AG04450 (cell line): ENCODE measurements at regions of chr1 and their contacts with region 1.

Region 1: GRCh38 chr1:68321084-68321685 is 88.9 kb upstream of the WLS start:
- DNase-seq: no peak
- H3K4me3 ChIP-seq: no peak overlapping the region
- H3K27ac ChIP-seq: no peak overlapping the region
- H3K27me3 ChIP-seq: no peaks in the 10 kb centered on the region
- CTCF ChIP-seq: peak; percentile 88

Region 2: DNA sequence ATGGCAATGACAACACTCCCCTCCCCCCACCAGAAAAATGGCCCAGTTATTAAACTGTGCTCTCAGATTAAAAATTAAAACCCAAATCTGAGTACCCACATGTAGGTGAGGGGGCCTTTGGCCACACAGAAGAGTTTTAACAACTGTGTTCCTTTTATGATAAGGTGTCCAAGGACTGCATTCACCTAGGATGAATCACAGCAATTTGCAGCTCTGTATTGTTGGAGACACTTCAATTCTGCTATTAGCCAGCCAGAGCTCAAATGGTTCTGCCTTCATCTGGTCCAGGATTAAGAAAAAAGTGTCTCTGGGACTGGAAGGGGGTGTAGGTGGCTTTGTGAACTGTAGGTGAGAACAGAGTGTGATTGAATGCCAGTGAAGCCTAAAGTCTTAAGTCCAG is 227.4 kb before region 1 on chr1:
- CTCF ChIA-PET with region 1: no interaction called
- POLR2A ChIA-PET with region 1: no interaction called
- DNase-seq: no peak
- H3K4me3 ChIP-seq: no peak overlapping the region
- H3K27ac ChIP-seq: no peak overlapping the region
- H3K27me3 ChIP-seq: no peaks in the 10 kb centered on the region
- CTCF ChIP-seq: no peak

Region 3: DNA sequence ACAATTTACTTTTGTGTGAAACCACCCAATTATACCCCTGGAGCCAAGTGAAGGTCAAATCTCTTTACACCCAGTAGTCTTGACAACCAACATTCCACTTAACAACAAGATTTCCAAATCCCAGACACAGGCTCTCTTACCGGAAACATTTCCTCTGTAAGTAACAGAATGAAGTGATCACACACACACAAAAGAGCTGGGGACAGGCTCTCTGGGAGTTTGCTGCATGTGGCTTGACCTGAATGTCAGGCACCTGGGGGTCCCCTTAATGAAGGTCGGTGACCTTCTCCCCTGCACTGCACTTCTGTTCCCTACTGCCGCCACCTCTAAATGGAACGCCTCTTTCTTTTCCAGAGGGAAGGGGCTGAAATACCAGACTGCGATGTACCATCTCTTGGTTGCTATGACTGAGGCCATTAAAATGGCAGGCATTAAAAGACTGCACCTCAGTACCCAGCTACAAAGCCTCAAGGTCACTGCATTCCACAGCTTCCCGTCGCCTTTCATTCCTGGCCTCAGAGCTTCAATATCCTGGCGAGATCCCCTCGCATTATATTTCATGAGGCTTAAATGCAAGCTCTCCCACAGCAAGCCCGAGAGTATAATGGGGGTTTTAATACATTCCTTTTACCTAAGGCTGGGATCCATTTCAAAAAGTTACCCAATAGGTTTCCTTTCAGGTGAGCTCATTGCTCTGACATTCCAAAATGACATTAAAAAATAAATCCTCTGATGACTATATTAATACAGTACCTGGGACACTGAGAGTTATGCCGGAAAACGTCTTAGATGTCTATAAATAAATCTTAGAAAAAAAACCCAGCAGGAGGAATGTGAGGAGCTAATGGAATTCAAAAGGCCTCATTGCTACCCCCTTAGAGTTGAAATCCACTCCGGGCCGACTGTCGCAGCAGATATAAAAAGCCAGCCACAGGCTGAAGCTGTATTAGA is 179.8 kb before region 1 on chr1:
- CTCF ChIA-PET with region 1: interaction called, 13 read pairs
- POLR2A ChIA-PET with region 1: no interaction called
- DNase-seq: no peak
- H3K4me3 ChIP-seq: no peak overlapping the region
- H3K27ac ChIP-seq: peak overlapping the region; percentile 58
- H3K27me3 ChIP-seq: no peaks in the 10 kb centered on the region
- CTCF ChIP-seq: no peak

Region 4: DNA sequence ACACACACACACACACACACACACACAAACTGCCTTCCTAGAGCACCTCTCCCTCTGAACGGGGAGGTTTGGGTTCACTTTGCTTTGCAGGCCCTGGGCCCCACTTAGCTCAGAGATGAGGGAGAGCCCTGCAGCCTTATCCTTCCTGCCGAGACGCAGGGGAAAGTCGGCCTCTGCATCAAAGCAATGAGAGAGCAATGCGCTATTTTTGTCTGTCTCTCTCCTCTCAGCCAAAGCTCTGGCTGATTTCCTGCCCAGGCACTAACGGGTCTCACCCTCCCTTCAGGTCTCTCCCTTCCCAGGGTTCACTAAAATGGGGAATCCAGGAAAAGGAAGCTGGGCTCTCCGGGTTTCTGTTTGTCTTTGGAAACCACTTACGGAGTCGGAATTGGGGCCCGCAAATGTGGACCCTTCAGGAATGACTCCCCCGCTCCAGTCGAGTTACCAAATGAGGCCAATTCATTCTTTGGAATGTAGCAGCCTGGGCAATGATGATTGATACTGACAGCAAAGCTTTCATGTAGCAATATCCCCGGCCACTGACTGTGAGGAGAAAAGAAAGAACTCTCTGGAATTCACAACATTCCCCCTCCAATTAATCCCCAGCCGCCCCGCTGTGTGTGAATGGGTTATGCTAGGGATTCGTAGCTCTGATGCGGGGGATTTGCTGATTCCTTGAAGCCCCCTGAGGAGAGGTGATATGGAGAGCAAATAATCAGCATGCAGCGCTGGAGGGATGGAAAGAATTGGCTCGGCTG is 27.4 kb before region 1 on chr1:
- CTCF ChIA-PET with region 1: interaction called, 12 read pairs
- POLR2A ChIA-PET with region 1: no interaction called
- DNase-seq: no peak
- H3K4me3 ChIP-seq: no peak overlapping the region; the same call in 1 of the 2 replicates
- H3K27ac ChIP-seq: peak overlapping the region; percentile 39
- H3K27me3 ChIP-seq: peaks cover 2% of the 10 kb centered on the region
- CTCF ChIP-seq: no peak

Region 5: DNA sequence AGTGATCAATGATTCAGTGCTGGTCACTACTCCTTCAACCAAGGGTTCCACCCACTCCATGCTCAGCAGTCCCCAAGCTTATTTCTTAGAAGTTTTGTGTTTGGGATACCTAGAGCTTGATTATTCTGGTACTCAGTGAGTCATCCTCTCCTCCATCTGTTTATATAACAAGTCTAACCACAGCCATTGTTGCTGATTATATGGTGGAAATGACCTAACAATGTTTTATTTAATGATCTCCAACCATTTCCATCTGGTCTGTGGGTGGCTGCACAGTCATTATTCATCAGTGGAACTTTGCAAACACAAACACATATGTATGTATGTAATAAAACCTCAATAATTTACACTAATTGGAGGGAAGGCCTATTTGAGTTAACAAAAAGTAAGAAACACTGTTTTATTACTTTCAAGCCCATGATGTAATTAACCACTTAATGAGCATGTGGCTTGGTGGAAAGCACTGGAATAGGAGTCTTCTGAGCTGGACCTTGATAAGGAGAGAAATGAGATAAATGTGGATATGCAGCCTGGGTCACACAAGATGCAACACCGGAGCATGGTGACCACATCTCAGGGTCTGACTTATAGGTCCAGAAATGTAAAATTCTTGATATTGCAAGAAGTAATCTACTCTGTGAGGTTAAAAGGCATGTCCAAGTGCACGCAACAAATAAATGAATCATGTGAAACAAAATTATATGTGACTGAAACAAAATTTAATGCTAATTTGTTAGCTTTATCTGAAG is 10.1 kb after region 1 on chr1:
- CTCF ChIA-PET with region 1: interaction called, 21 read pairs
- POLR2A ChIA-PET with region 1: interaction called, 4 read pairs
- DNase-seq: peak; percentile 84
- H3K4me3 ChIP-seq: no peak overlapping the region
- H3K27ac ChIP-seq: peak overlapping the region; percentile 54
- H3K27me3 ChIP-seq: no peaks in the 10 kb centered on the region
- CTCF ChIP-seq: no peak